CD8-positive, alpha-beta T cell (primary cell): ENCODE measurements at regions of chr6 and their contacts with region 1.

Region 1: GRCh38 chr6:30006170-30007131 is 54.6 kb upstream of the POLR1H start:
- DNase-seq: peak in 5 of 9 experiments; percentile 20 to 54 (median 39)
- ATAC-seq: peak; percentile 46
- H3K4me3 ChIP-seq: peak overlapping the region; percentile 53 to 61
- H3K4me3 Mint-ChIP-seq: peak overlapping the region; percentile 75
- H3K27ac ChIP-seq: peak overlapping the region in 1 of 2 experiments; percentile 75
- H3K27ac Mint-ChIP-seq: no peak overlapping the region
- H3K4me1 ChIP-seq: peaks cover 20% of the 10 kb centered on the region
- H3K4me1 Mint-ChIP-seq: peaks cover 8% of the 10 kb centered on the region
- H3K27me3 ChIP-seq: peaks cover 16 to 27% of the 10 kb centered on the region in 2 experiments
- H3K27me3 Mint-ChIP-seq: peaks cover 13% of the 10 kb centered on the region
- CTCF ChIP-seq: no peak

Region 2: DNA sequence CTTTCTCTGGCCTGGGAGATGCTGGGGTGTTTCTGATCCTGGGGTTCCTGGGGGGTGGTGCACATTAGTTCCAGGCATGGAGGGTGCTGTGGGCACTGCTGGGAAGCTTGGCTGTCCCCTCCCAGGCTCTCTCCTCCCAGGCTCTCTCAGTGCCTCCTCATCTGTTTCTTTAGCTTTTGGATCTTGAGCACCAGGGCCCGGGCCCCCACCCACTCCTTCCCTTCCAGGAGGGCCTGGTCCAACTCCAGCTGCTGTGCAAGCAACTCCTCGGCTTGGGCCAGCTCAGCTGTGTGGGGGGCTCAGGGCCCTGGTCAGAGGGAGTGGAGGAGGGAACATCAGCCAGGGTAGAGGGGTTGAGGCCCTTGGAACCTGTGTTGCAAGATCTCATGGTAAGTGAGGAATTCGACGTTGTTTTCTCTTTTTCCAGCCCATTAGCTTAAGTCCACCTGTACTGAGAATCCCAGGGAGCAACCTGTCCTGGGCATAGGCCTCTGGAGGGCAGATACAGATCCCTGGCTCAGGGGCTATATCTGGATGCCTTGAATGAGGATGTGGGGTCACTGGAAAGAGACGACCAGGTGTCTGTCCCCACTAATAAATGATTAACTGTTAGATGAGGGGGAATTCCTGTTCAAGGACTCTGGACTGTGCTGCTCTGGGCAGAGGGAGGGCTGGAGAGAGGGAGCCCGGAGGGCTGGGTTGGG is 98.7 kb before region 1 on chr6:
- CTCF ChIA-PET with region 1: no interaction called
- POLR2A ChIA-PET with region 1: no interaction called
- intact Hi-C with region 1: loop called in 1 of 2 experiments (anchors 5 kb)
- DNase-seq: no peak
- ATAC-seq: no peak
- H3K4me3 ChIP-seq: no peak overlapping the region
- H3K4me3 Mint-ChIP-seq: no peak overlapping the region
- H3K27ac ChIP-seq: no peak overlapping the region
- H3K27ac Mint-ChIP-seq: no peak overlapping the region
- H3K4me1 ChIP-seq: no peaks in the 10 kb centered on the region
- H3K4me1 Mint-ChIP-seq: no peaks in the 10 kb centered on the region
- H3K27me3 ChIP-seq: no peaks in the 10 kb centered on the region
- H3K27me3 Mint-ChIP-seq: peaks cover 20% of the 10 kb centered on the region
- CTCF ChIP-seq: no peak